PC-3 (cell line): ENCODE measurements at regions of chr2 and their contacts with region 1.

Region 1: GRCh38 chr2:204632410-204632809 is 87.1 kb downstream of the PARD3B start:
- DNase-seq: no peak
- ATAC-seq: no peak
- H3K4me3 ChIP-seq: no peak overlapping the region
- H3K27ac ChIP-seq: no peak overlapping the region
- H3K4me1 ChIP-seq: peaks cover 5% of the 10 kb centered on the region; the same call in 1 of the 2 replicates
- H3K27me3 ChIP-seq: no peaks in the 10 kb centered on the region
- CTCF ChIP-seq: no peak

Region 2: GRCh38 chr2:204673877-204674276 is 41.5 kb after region 1 on chr2:
- CTCF ChIA-PET with region 1: no interaction called
- POLR2A ChIA-PET with region 1: no interaction called
- intact Hi-C with region 1: loop called (anchors 5 kb)
- DNase-seq: peak; percentile 70
- ATAC-seq: peak; percentile 81
- H3K4me3 ChIP-seq: no peak overlapping the region
- H3K27ac ChIP-seq: peak overlapping the region; percentile 10; the same call in 1 of the 2 replicates
- H3K4me1 ChIP-seq: peaks cover 21% of the 10 kb centered on the region; the same call in 1 of the 2 replicates
- H3K27me3 ChIP-seq: no peaks in the 10 kb centered on the region
- CTCF ChIP-seq: no peak